Mammary epithelial cell (primary cell): ENCODE measurements at regions of chr11 and their contacts with region 1.

Region 1: GRCh38 chr11:106391771-106392420 is 314.4 kb downstream of the AASDHPPT start:
- DNase-seq: peak; percentile 12
- H3K4me3 ChIP-seq: no peak overlapping the region
- H3K27ac ChIP-seq: no peak overlapping the region
- H3K4me1 ChIP-seq: peaks cover 24% of the 10 kb centered on the region
- H3K27me3 ChIP-seq: no peaks in the 10 kb centered on the region
- CTCF ChIP-seq: no peak

Region 2: DNA sequence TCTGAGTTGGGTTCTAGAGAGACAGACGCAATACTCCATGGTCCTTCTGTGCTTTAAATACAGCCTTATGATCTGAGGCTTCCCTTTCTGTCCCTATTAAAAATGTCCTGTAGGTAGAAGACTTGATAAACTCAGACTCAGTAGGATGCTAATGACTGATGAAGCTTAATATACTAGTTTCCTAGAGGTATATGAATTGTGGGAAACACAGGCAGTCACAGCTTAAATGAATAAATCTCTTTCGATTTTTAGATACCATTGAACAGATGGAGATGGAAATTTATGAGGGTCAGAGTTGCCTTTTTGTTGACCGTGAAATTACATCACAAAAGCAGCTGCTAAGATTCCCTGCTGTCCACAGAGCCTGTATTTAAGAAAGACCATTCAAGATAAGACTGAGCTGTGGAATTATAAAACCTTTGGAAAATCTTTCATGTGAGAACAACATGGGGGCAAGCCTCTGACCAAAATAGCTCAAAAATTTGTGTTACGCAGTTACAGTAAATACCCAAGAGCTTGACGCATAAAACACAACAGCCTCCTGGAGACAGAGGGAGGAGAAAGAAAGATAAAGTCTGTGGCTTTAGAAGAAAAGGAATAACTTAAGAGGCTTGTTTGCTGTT is 142.2 kb before region 1 on chr11:
- CTCF ChIA-PET with region 1: no interaction called
- dilution Hi-C with region 1: no loop called
- in situ Hi-C with region 1: no loop called
- intact Hi-C with region 1: no loop called
- DNase-seq: no peak
- H3K4me3 ChIP-seq: no peak overlapping the region
- H3K27ac ChIP-seq: no peak overlapping the region
- H3K4me1 ChIP-seq: no peaks in the 10 kb centered on the region
- H3K27me3 ChIP-seq: no peaks in the 10 kb centered on the region
- CTCF ChIP-seq: no peak

Region 3: DNA sequence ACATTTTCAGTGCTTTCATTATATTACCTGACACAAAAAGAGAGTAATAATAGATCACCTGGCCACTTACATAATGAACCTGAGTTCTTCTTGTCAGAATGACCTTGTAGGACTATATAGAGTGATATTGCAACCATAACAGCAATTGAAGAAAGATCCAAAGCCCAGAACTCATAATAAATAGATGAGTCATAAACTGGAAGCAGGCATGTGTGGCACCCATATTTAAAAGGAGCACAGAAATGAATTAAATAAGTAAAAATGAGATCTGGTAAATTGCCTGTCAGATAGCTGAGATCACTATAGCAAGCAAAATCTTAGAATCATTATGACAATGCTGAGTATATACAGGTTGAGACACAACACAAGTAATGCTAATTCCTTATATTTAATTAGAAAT is 17.3 kb after region 1 on chr11:
- CTCF ChIA-PET with region 1: no interaction called
- dilution Hi-C with region 1: no loop called
- in situ Hi-C with region 1: no loop called
- intact Hi-C with region 1: no loop called
- DNase-seq: no peak
- H3K4me3 ChIP-seq: no peak overlapping the region
- H3K27ac ChIP-seq: no peak overlapping the region
- H3K4me1 ChIP-seq: no peaks in the 10 kb centered on the region
- H3K27me3 ChIP-seq: no peaks in the 10 kb centered on the region
- CTCF ChIP-seq: no peak

Region 4: GRCh38 chr11:106424111-106424510 is 32.2 kb after region 1 on chr11:
- CTCF ChIA-PET with region 1: no interaction called
- dilution Hi-C with region 1: no loop called
- in situ Hi-C with region 1: no loop called
- intact Hi-C with region 1: no loop called
- DNase-seq: peak; percentile 85
- H3K4me3 ChIP-seq: no peak overlapping the region
- H3K27ac ChIP-seq: no peak overlapping the region
- H3K4me1 ChIP-seq: peaks cover 28% of the 10 kb centered on the region
- H3K27me3 ChIP-seq: no peaks in the 10 kb centered on the region
- CTCF ChIP-seq: no peak

Region 5: GRCh38 chr11:106482917-106483785 is 91.3 kb after region 1 on chr11:
- CTCF ChIA-PET with region 1: no interaction called
- dilution Hi-C with region 1: loop called (anchors 5 kb)
- in situ Hi-C with region 1: no loop called
- intact Hi-C with region 1: no loop called
- DNase-seq: peak; percentile 66
- H3K4me3 ChIP-seq: no peak overlapping the region
- H3K27ac ChIP-seq: no peak overlapping the region
- H3K4me1 ChIP-seq: peaks cover 8% of the 10 kb centered on the region
- H3K27me3 ChIP-seq: no peaks in the 10 kb centered on the region
- CTCF ChIP-seq: no peak

Region 6: DNA sequence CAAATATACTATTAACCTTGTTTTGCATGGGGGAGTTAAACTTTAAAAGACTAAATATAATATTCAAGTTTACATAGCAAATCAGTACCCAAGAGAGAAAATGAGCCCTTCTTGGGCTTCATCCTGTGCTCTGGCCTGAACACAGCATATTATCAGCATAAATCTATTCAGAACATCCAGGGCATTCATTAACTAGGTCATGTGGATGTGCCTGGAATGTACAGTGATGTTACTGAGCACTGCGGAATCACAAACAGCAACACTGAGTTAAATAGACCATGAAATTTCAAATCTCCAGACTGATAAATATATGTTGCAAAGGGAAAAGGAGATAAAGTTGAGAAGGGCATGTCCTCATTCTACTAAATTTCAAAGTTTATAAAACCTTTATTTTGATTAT is 112.0 kb after region 1 on chr11:
- CTCF ChIA-PET with region 1: no interaction called
- dilution Hi-C with region 1: no loop called
- in situ Hi-C with region 1: no loop called
- intact Hi-C with region 1: no loop called
- DNase-seq: no peak
- H3K4me3 ChIP-seq: no peak overlapping the region
- H3K27ac ChIP-seq: no peak overlapping the region
- H3K4me1 ChIP-seq: no peaks in the 10 kb centered on the region
- H3K27me3 ChIP-seq: no peaks in the 10 kb centered on the region
- CTCF ChIP-seq: no peak